Naive thymus-derived CD4-positive, alpha-beta T cell (primary cell): ENCODE measurements at regions of chr11 and their contacts with region 1.

Region 1: GRCh38 chr11:87081358-87081757 is 43.6 kb downstream of the TMEM135 start:
- DNase-seq: peak in 5 of 9 donors; percentile 3 to 25 (median 20)
- ATAC-seq: no peak
- H3K4me3 ChIP-seq: peak overlapping the region; percentile 6
- H3K4me3 Mint-ChIP-seq: peak overlapping the region; percentile 56 to 89 (median 85)
- H3K27ac ChIP-seq: peak overlapping the region; percentile 14
- H3K27ac Mint-ChIP-seq: peak overlapping the region; percentile 83 to 98 (median 88)
- H3K4me1 ChIP-seq: no peaks in the 10 kb centered on the region
- H3K4me1 Mint-ChIP-seq: peaks cover 16 to 35% (median 29%) of the 10 kb centered on the region in 7 donors
- H3K27me3 ChIP-seq: no peaks in the 10 kb centered on the region
- H3K27me3 Mint-ChIP-seq: no peaks in the 10 kb centered on the region

Region 2: DNA sequence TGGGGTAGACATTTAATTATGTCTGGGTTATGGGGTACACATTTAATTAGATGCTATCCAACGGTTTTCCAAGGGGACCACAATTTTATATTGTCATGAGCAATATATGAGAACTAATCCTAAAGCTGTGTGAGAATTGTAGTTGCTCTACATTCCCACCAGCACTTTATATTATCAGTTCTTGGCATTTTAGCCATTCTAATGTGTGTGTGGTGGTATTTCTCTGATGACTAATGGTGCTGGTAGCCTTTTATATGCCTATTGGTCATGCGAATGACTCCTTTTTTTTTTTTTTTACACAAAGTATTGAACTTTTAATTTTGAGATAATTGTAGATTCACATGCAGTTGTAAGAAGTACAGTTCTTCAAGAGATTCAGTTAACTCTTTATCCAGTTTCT is 17.4 kb before region 1 on chr11:
- CTCF ChIA-PET with region 1: no interaction called
- POLR2A ChIA-PET with region 1: no interaction called
- intact Hi-C with region 1: no loop called
- DNase-seq: no peak
- ATAC-seq: no peak
- H3K4me3 ChIP-seq: no peak overlapping the region
- H3K4me3 Mint-ChIP-seq: no peak overlapping the region
- H3K27ac ChIP-seq: no peak overlapping the region
- H3K27ac Mint-ChIP-seq: no peak overlapping the region
- H3K4me1 ChIP-seq: no peaks in the 10 kb centered on the region
- H3K4me1 Mint-ChIP-seq: peaks cover 7 to 32% (median 26%) of the 10 kb centered on the region in 7 donors
- H3K27me3 ChIP-seq: no peaks in the 10 kb centered on the region
- H3K27me3 Mint-ChIP-seq: no peaks in the 10 kb centered on the region

Region 3: GRCh38 chr11:87097582-87097981 is 16.2 kb after region 1 on chr11:
- CTCF ChIA-PET with region 1: no interaction called
- POLR2A ChIA-PET with region 1: no interaction called
- intact Hi-C with region 1: loop called in 1 of 2 experiments (anchors 1 kb)
- DNase-seq: peak in 6 of 9 donors; percentile 13 to 38 (median 32)
- ATAC-seq: peak; percentile 82
- H3K4me3 ChIP-seq: no peak overlapping the region
- H3K4me3 Mint-ChIP-seq: peak overlapping the region in 4 of 10 donors; percentile 2 to 53 (median 16)
- H3K27ac ChIP-seq: no peak overlapping the region
- H3K27ac Mint-ChIP-seq: peak overlapping the region in 2 of 9 donors; percentile 4 to 44
- H3K4me1 ChIP-seq: no peaks in the 10 kb centered on the region
- H3K4me1 Mint-ChIP-seq: peaks cover 1 to 9% (median 8%) of the 10 kb centered on the region in 7 donors
- H3K27me3 ChIP-seq: no peaks in the 10 kb centered on the region
- H3K27me3 Mint-ChIP-seq: no peaks in the 10 kb centered on the region